Colonic mucosa (tissue), 4 donors: ENCODE measurements at regions of chr1 and their contacts with region 1.

Region 1: GRCh38 chr1:197343663-197344273 is 75.7 kb downstream of the CRB1 start:
- DNase-seq: no peak
- H3K4me3 ChIP-seq: no peak overlapping the region
- H3K27ac ChIP-seq: no peak overlapping the region
- H3K4me1 ChIP-seq: no peaks in the 10 kb centered on the region
- H3K27me3 ChIP-seq: no peaks in the 10 kb centered on the region
- CTCF ChIP-seq: no peak

Region 2: DNA sequence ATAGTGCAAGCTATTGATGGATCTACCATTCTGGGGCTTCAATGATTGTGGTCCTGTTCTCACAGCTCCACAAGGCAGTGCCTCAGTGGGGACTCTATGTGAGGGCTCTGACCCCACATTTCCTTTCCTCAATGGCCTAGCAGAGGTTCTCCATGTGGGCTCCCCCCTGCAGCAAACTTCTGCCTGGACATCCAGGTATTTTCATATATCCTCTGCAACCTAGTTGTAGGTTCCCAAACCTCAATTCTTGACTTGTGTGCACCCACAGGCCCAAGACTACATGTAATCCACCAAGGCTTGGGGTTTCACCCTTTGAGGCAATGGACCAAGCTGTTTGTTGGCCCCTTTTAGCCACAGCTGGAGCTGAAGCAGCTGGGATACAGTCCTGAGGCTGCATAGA is 605.0 kb before region 1 on chr1:
- intact Hi-C with region 1: loop called (anchors 10 kb)
- DNase-seq: no peak
- H3K4me3 ChIP-seq: no peak overlapping the region
- H3K27ac ChIP-seq: no peak overlapping the region
- H3K4me1 ChIP-seq: no peaks in the 10 kb centered on the region
- H3K27me3 ChIP-seq: no peaks in the 10 kb centered on the region
- CTCF ChIP-seq: no peak

Region 3: GRCh38 chr1:197178998-197179397 is 164.8 kb before region 1 on chr1:
- intact Hi-C with region 1: loop called (anchors 10 kb)
- DNase-seq: no peak
- H3K4me3 ChIP-seq: no peak overlapping the region
- H3K27ac ChIP-seq: no peak overlapping the region
- H3K4me1 ChIP-seq: no peaks in the 10 kb centered on the region
- H3K27me3 ChIP-seq: no peaks in the 10 kb centered on the region
- CTCF ChIP-seq: no peak